ENCODE measurements at regions of chr13 and their contacts with region 1.

Region 1: DNA sequence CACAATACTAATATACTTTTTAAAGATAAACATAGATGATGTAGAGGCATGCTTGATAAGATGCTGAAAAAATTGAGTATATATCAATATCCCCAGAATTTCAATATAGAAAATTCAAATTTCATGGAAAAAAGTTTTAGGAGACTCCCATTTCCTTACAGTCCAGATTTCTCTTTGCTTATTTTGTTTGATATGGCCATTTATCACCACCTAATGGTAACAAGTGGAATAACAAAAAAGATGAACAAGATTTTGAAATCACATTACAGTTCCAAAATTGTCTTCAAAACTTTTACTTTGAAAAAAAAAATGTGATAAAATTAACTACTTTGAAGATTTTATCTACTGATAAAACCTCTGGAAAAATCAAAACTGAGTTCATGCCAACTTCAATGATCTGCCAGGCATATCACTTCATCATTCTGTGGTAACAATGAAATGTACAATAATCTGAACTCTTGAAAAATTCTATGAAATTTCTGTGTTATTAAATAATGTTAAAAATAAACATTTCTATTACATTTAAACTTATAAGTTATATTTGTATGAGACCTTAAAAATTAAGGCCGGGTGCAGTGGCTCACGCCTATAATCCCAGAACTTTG is 17.5 kb downstream of the MIPEP start:
- DNase-seq: no peak
- H3K4me3 ChIP-seq: no peak overlapping the region
- H3K27ac ChIP-seq: no peak overlapping the region
- H3K4me1 ChIP-seq: no peaks in the 10 kb centered on the region
- H3K27me3 ChIP-seq: no peaks in the 10 kb centered on the region
- CTCF ChIP-seq: peak in 2 of 3 donors; percentile 50 to 56
- EP300 ChIP-seq: no peak
- POLR2A ChIP-seq: no peak

Region 2: DNA sequence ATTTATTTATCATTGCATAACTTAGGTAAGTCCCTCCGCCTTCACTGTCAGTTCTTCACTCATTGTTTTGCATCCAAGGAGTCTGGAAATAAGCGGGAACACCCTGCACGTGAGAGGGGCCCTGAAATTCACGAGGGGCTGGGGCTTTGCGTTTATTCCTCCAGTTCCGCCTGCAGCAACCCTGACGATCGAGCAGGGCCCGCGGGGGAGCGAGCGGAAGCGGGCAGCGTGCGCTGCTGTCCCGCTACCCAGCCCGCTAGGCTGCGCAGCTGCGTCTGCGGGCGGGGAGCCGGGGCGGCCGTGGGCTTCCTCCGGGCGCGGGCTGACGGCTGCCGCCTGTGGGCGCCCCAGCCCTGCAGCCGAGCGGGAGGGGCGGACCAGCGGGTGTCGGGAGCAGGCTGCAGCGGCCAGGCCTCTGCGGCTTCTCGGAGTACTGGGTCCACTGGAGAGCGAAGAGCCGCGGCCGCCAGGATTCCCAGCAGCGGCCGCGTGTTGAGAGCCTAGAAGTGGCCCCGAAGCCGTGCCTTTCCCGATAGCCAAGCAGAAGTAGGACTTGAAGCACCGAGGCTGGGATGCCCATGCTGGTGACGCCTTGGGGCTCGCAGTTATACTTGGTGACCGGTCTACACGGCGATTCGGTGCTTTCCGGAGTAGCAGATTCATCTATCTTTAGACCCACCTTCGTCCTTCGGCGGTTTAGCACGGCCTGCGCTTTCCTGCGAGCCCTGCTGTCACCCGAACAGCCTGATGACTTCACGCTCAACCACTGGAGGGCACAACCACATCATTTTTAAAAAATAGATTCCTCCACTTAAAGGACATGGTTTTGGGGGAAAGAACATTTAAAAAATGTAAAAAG is 405.3 kb before region 1 on chr13:
- intact Hi-C with region 1: loop called (anchors 5 to 10 kb)
- DNase-seq: peak; percentile 59 to 77 (median 73)
- H3K4me3 ChIP-seq: peak overlapping the region; percentile 33
- H3K27ac ChIP-seq: peak overlapping the region; percentile 18 to 79
- H3K4me1 ChIP-seq: no peaks in the 10 kb centered on the region
- H3K27me3 ChIP-seq: no peaks in the 10 kb centered on the region
- CTCF ChIP-seq: peak in 2 of 3 donors; percentile 44 to 62
- EP300 ChIP-seq: no peak
- POLR2A ChIP-seq: no peak

Region 3: GRCh38 chr13:23579072-23579895 is 292.4 kb before region 1 on chr13:
- intact Hi-C with region 1: loop called in 2 of 4 experiments (anchors 10 kb)
- DNase-seq: peak; percentile 91 to 96 (median 96)
- H3K4me3 ChIP-seq: peak overlapping the region; percentile 73
- H3K27ac ChIP-seq: peak overlapping the region; percentile 68 to 90
- H3K4me1 ChIP-seq: peaks cover 2% of the 10 kb centered on the region
- H3K27me3 ChIP-seq: no peaks in the 10 kb centered on the region
- CTCF ChIP-seq: no peak
- EP300 ChIP-seq: no peak
- POLR2A ChIP-seq: peak; percentile 42

Region 4: GRCh38 chr13:23715762-23716235 is 155.9 kb before region 1 on chr13:
- intact Hi-C with region 1: loop called in 1 of 4 experiments (anchors 10 kb)
- DNase-seq: no peak
- H3K4me3 ChIP-seq: no peak overlapping the region
- H3K27ac ChIP-seq: no peak overlapping the region
- H3K4me1 ChIP-seq: no peaks in the 10 kb centered on the region
- H3K27me3 ChIP-seq: no peaks in the 10 kb centered on the region
- CTCF ChIP-seq: no peak
- EP300 ChIP-seq: no peak
- POLR2A ChIP-seq: no peak

Region 5: DNA sequence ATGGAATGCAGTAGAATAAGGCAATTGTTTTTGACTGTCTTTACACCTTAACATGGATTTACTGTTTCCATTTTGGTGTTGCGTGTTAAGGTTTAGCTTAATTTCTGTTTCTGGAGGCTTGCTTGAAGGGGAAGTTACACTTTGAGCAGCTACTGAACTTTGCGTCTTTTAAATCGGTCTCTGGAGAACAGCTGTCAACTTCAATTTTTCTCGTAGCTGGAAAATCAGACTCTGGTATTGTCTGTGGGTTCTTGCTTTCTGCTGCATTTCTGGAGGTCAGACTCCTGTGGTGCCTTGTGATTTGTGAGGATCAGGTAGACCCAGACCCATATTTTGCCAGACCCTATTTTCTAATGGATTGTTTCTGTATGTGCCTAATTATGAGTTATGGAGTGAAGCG is 1646.7 kb after region 1 on chr13:
- intact Hi-C with region 1: loop called in 1 of 4 experiments (anchors 5 kb)
- DNase-seq: no peak
- H3K4me3 ChIP-seq: no peak overlapping the region
- H3K27ac ChIP-seq: no peak overlapping the region
- H3K4me1 ChIP-seq: no peaks in the 10 kb centered on the region
- H3K27me3 ChIP-seq: no peaks in the 10 kb centered on the region
- CTCF ChIP-seq: no peak
- EP300 ChIP-seq: no peak
- POLR2A ChIP-seq: no peak